ENCODE measurements at regions of chr11 and their contacts with region 1.

Region 1: GRCh38 chr11:3359092-3359824 is 19.7 kb downstream of the ZNF195 start:
- DNase-seq: no peak
- ATAC-seq: no peak
- H3K4me3 ChIP-seq: no peak overlapping the region
- H3K4me3 Mint-ChIP-seq: no peak overlapping the region
- H3K27ac ChIP-seq: no peak overlapping the region
- H3K27ac Mint-ChIP-seq: no peak overlapping the region
- H3K4me1 ChIP-seq: no peaks in the 10 kb centered on the region
- H3K4me1 Mint-ChIP-seq: no peaks in the 10 kb centered on the region
- H3K27me3 ChIP-seq: no peaks in the 10 kb centered on the region
- H3K27me3 Mint-ChIP-seq: no peaks in the 10 kb centered on the region
- CTCF ChIP-seq: no peak

Region 2: DNA sequence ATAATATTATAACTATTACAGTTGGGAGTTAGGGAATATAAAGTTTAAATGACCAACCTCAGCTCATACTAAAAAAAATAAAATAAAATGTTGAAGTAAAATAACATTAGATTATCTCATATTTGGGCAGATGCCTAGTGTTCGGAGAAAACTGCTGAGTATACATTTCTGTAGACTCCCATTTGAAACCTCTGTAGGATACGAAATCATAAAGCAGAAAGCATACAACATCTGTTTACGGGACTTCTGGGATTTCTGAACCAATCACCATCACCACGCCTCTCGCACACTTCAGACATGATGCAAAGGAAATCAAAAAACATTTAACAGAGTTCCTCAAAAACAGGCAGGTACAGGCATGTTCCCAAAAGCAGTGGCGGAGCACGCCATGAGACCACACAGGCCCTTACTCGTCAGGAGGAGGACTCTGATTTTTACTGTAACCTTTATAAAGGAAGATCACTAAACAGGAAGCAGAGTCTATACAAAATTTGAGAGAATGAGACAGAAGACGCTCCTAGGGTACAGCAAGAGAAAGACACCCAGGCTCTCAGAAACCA is 11.1 kb after region 1 on chr11:
- CTCF ChIA-PET with region 1: no interaction called
- POLR2A ChIA-PET with region 1: no interaction called
- intact Hi-C with region 1: no loop called
- DNase-seq: no peak
- ATAC-seq: no peak
- H3K4me3 ChIP-seq: no peak overlapping the region
- H3K4me3 Mint-ChIP-seq: no peak overlapping the region
- H3K27ac ChIP-seq: no peak overlapping the region
- H3K27ac Mint-ChIP-seq: no peak overlapping the region
- H3K4me1 ChIP-seq: peaks cover 2% of the 10 kb centered on the region
- H3K4me1 Mint-ChIP-seq: peaks cover 10% of the 10 kb centered on the region
- H3K27me3 ChIP-seq: no peaks in the 10 kb centered on the region
- H3K27me3 Mint-ChIP-seq: no peaks in the 10 kb centered on the region
- CTCF ChIP-seq: no peak

Region 3: GRCh38 chr11:3914805-3915204 is 555.5 kb after region 1 on chr11:
- CTCF ChIA-PET with region 1: no interaction called
- POLR2A ChIA-PET with region 1: no interaction called
- intact Hi-C with region 1: loop called in 1 of 2 experiments (anchors 5 kb)
- DNase-seq: peak in 3 of 14 experiments; percentile 66 to 70 (median 68)
- ATAC-seq: peak; percentile 55
- H3K4me3 ChIP-seq: no peak overlapping the region
- H3K4me3 Mint-ChIP-seq: peak overlapping the region; percentile 1
- H3K27ac ChIP-seq: no peak overlapping the region
- H3K27ac Mint-ChIP-seq: peak overlapping the region; percentile 46
- H3K4me1 ChIP-seq: peaks cover 49% of the 10 kb centered on the region
- H3K4me1 Mint-ChIP-seq: peaks cover 85% of the 10 kb centered on the region
- H3K27me3 ChIP-seq: no peaks in the 10 kb centered on the region
- H3K27me3 Mint-ChIP-seq: no peaks in the 10 kb centered on the region
- CTCF ChIP-seq: no peak

Measured in CD4-positive, alpha-beta T cell (primary cell).